ENCODE measurements at regions of chr22 and their contacts with region 1.

Region 1: DNA sequence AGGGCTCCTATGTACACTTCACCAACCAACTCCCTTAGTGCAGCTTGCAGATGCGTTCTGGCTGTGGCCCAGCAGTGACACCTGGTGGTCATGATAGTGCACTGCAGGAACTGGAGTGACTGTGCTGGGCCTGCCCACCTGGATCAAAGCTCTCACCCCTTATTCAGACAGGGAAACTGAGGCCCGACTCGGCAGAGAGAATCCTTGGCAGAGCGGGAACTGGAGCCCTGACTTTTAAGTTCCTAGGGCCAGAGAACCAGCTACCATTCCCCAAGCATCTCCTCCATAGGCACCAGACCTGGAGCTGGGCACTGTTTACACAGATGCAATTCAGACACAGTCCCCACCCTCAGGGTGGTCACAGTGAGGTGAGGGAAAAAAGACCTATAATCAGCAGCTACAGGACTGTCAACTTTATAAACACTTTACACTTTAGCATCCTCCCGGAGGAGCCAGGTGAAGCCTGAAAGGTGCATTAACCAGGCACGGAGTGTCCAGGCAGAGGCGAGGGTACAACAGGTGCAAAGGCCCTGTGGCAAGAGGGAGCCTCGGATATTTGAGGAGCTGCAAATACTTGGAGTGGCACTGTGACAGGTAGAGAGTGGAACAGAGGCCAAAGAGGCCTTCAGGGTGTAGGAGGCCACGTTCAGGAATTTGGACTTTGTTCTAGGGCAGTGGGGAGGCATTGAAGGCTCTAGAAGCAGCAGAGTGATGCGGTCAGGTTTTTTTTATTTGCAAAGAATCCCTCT is 22.0 kb downstream of the RHBDD3 start:
- DNase-seq: peak; percentile 81
- ATAC-seq: peak; percentile 94
- H3K4me3 Mint-ChIP-seq: no peak overlapping the region
- H3K27ac Mint-ChIP-seq: no peak overlapping the region
- H3K4me1 Mint-ChIP-seq: no peaks in the 10 kb centered on the region
- H3K27me3 Mint-ChIP-seq: peaks cover 7% of the 10 kb centered on the region

Region 2: GRCh38 chr22:28600546-28601143 is 645.2 kb before region 1 on chr22:
- CTCF ChIA-PET with region 1: interaction called, 3 read pairs
- POLR2A ChIA-PET with region 1: no interaction called
- intact Hi-C with region 1: loop called (anchors 1 to 2 kb)
- DNase-seq: peak; percentile 6
- ATAC-seq: no peak
- H3K4me3 Mint-ChIP-seq: no peak overlapping the region
- H3K27ac Mint-ChIP-seq: no peak overlapping the region
- H3K4me1 Mint-ChIP-seq: no peaks in the 10 kb centered on the region
- H3K27me3 Mint-ChIP-seq: peaks cover 5% of the 10 kb centered on the region

Region 3: DNA sequence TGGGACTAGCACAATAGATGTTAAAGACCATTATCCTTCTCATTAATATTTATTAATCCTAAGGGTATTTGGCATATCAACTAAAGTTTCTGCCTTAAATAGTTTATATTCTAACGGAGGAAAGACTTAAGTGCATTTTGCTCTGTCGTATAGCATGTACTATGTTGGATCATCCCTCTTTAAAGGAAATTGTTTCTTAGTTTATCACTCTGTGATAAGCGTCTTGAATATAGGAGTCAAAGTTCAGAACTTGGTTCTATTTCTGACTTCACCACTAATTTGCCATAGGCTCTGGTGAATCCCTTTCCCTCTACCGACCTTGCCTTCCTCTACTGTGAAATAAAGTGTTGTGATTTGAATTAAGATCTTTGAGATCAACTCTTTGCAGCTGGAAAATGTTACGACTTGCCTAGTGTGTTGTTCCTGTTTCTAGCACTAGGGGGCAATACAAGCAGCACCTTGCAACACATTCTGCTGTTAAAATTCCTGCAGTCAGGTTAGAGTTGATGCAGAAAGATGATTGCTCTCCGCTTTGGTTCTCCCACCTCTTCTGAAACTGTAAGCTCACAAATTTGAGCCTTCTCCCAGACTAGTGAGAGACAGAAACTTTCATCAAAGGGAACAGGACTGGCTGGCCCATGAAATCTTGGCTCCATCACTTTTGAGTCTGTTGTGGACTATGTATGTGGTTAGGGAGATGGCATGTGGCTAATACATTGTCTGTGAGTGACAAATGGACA is 390.3 kb before region 1 on chr22:
- CTCF ChIA-PET with region 1: interaction called, 4 read pairs
- POLR2A ChIA-PET with region 1: no interaction called
- intact Hi-C with region 1: loop called (anchors 1 kb)
- DNase-seq: peak; percentile 52
- ATAC-seq: peak; percentile 36
- H3K4me3 Mint-ChIP-seq: no peak overlapping the region
- H3K27ac Mint-ChIP-seq: no peak overlapping the region
- H3K4me1 Mint-ChIP-seq: no peaks in the 10 kb centered on the region
- H3K27me3 Mint-ChIP-seq: peaks cover 6% of the 10 kb centered on the region

Region 4: DNA sequence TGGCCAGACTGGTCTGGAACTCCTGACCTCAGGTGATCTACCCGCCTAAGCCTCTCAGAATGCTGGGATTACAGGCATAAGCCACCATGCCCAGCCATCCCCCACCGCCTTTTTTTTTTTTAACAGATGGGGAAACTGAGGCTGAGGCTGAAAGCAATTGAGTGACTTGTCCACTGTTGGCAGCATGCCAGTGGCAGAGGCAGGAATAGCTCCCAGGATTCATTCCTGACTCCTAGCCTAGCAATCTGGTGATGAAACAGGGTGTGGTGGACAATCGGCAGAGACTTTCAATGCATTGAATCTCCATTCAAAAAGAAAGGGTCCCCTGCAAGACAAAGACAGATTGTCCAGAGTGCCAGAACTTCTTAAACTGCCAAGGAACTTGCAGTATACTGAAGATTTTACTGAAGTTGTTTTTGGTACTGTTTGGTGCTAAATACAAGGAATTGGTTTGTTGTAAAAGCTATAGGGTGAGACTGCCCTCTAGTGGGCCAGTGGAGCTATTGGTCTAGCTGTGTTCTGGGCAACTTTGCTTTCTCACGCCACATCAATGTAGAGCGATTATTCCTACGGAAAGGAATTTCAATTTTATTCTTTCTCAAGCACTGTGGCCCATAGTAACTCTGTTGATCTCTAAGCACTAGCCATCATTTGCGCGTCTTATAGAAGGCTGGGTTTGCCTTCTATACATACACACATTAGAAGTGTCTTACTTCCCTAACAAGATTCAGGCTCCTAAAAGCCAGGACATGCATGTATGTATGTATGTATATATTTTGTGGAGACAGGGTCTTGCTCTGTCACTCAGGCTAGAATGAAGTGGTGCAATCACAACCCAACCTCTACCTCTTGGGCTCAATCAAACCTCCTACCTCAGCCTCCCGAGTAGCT is 205.2 kb before region 1 on chr22:
- CTCF ChIA-PET with region 1: interaction called, 8 read pairs
- POLR2A ChIA-PET with region 1: no interaction called
- intact Hi-C with region 1: loop called in 1 of 2 experiments (anchors 2 kb)
- DNase-seq: peak; percentile 77
- ATAC-seq: peak; percentile 65
- H3K4me3 Mint-ChIP-seq: no peak overlapping the region
- H3K27ac Mint-ChIP-seq: no peak overlapping the region
- H3K4me1 Mint-ChIP-seq: no peaks in the 10 kb centered on the region
- H3K27me3 Mint-ChIP-seq: peaks cover 7% of the 10 kb centered on the region

Region 5: DNA sequence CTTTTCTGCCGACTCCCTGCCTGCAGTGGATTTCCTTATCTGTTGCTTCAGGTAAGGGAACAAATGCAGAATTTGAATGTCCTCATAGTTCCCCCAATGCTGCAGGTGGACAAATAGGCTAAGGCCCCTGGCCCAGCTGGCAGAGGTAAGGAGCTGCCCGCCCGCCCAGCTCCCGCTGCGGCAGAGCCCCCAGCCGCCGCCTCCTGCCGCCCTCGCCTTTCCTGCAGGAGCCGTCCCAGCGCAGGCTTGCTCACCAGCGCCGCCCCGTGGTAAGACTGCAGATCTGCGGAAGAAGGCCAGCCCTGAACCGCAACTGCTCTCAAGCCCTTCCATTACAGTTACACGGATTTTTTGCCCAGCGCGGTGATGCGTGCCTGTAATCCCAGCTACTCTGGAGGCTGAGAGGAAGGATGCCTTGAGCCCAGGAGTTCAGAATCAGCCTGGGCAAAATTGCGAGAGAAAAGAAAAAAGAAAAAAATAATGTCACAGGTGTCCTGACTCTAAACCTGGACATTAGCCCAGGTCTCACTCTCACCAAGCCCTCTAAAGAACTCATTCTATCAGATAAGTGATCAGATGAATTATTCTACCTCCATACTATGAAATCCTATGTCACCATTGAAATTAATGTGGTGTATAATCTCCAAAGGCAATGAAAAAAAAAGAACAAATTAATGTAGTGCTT is 91.3 kb before region 1 on chr22:
- CTCF ChIA-PET with region 1: interaction called, 11 read pairs
- POLR2A ChIA-PET with region 1: no interaction called
- intact Hi-C with region 1: loop called in 1 of 2 experiments (anchors 1 kb)
- DNase-seq: peak; percentile 88
- ATAC-seq: peak; percentile 86
- H3K4me3 Mint-ChIP-seq: no peak overlapping the region
- H3K27ac Mint-ChIP-seq: no peak overlapping the region
- H3K4me1 Mint-ChIP-seq: peaks cover 6% of the 10 kb centered on the region
- H3K27me3 Mint-ChIP-seq: peaks cover 18% of the 10 kb centered on the region

Region 6: DNA sequence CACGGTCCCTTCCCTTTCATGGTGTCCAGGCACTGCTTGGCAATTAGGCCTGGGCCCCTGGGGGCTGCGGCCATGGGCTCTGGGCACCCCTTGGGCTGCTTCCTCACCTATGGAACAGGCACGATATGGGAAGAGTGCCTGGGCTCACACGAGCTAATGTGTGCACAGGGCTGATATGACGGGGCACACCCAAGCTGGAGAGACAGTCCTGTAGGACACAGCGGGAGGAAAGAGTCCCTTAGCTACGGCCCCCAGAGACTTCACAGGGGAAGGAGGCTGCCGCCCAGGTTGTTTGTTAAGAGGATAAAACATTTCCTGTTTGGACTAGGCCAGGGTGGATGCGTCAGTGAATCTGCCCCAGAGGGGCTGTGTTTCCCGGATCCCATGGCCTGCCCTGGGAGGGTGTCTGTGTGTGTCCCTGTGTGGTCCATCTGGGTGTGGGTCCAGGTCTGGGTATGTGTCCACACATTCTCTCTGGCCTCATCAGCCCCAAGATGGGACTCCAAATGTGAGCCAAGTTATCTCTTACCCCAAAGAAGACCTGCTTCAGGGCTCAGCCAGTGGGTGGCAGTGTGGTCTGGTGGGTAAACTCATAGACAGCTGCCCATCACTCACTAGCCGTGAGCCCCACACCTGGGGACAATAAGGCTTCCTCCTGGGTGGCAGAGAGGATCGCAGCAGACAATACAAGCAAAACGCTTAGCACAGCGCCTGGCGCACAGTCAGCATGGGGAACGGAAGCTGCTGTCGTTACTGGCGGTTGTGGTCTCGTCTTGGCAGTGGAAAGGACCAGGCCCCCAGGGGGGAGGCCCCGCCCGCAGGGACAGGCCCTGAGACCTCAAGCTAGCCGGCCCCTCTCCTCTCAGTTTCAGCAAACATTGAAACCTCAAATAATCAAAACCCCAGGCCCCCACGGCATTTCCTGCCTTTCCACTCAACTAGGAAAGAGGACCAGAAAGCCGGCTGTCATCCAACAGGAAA is 43.3 kb before region 1 on chr22:
- CTCF ChIA-PET with region 1: interaction called, 19 read pairs
- POLR2A ChIA-PET with region 1: no interaction called
- intact Hi-C with region 1: loop called in 1 of 2 experiments (anchors 5 kb)
- DNase-seq: peak; percentile 80
- ATAC-seq: peak; percentile 74
- H3K4me3 Mint-ChIP-seq: no peak overlapping the region
- H3K27ac Mint-ChIP-seq: peak overlapping the region; percentile 19
- H3K4me1 Mint-ChIP-seq: peaks cover 16% of the 10 kb centered on the region
- H3K27me3 Mint-ChIP-seq: peaks cover 34% of the 10 kb centered on the region